ENCODE measurements at regions of chr18 and their contacts with region 1.

Region 1: GRCh38 chr18:37429791-37430190 is 135.8 kb downstream of the CELF4 start:
- DNase-seq: no peak
- H3K4me3 ChIP-seq: no peak overlapping the region
- H3K27ac ChIP-seq: no peak overlapping the region
- H3K4me1 ChIP-seq: no peaks in the 10 kb centered on the region
- H3K27me3 ChIP-seq: no peaks in the 10 kb centered on the region
- CTCF ChIP-seq: no peak
- EP300 ChIP-seq: no peak
- POLR2A ChIP-seq: no peak

Region 2: DNA sequence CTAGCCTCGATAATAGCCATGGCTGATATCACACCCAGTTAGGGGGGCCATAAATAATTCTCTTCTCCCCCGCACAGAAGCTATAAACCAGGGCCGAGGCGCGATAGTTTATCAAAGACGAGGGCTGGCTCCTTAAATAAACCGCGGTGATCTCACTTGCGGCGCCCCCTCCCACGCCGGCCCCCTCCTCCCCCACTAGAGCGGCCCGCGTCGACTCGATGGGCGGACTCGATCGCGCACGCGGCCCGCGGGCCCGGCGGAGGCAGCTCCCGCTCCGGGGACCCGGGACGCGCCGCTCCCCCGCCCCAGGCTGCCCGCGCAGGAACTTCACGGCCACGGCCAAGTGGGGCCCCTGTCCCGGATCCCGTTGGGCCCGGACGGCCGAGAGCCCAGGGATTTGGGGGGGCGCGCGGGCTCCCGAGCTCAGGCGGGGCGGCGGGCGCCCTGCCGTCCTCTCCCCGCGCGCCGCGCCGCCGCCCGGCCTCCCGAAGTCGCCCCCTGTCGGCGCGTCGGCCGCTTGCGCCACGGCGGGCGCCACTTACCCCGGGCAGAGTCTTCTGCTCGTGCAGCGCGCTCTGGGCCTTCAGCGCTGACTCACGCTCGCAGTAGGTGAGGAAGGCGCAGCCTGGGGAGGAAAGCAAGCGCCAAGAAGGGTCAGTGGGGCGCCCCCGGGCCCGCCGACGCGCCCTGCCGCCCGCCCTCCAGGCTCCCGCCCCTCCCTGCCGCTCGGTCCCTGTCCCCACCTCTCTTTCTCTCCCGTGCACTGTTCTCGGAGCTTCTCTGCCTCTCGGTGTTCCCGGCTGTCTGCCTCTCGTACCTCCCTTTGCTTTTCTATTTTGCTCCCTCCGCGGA is 55.4 kb after region 1 on chr18:
- intact Hi-C with region 1: loop called in 1 of 4 experiments (anchors 10 kb)
- DNase-seq: peak; percentile 48 to 71 (median 54)
- H3K4me3 ChIP-seq: no peak overlapping the region
- H3K27ac ChIP-seq: no peak overlapping the region
- H3K4me1 ChIP-seq: peaks cover 13% of the 10 kb centered on the region
- H3K27me3 ChIP-seq: no peaks in the 10 kb centered on the region
- CTCF ChIP-seq: peak in 2 of 3 donors; percentile 27 to 52
- EP300 ChIP-seq: no peak
- POLR2A ChIP-seq: no peak

Measured in ovary (tissue), 10 donors.